Lower leg skin (tissue), 4 donors: ENCODE measurements at regions of chr10 and their contacts with region 1.

Region 1: GRCh38 chr10:22958338-22958737 is 30.5 kb downstream of the ARMC3 start:
- DNase-seq: no peak
- H3K4me3 ChIP-seq: no peak overlapping the region
- CTCF ChIP-seq: no peak
- POLR2A ChIP-seq: no peak

Region 2: DNA sequence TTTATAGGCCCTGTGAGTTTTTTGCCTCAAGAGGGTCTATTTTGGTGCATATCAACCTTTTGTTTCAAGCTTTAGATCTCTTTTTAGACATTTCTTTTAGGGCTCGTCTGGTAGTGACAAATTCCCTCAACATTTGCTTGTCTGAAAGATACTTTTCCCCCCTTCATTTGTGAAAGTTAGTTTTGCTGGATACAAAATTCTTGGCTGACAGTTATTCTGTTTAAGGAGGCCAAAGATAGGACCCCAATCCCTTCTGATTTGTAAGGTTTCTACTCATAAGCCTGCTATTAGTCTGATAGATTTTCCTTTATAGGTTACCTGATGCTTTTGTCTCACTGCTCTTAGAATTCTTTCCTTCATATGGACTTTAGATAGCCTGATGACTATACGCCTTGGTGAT is 66.5 kb before region 1 on chr10:
- intact Hi-C with region 1: loop called (anchors 2 kb)
- DNase-seq: no peak
- H3K4me3 ChIP-seq: no peak overlapping the region
- CTCF ChIP-seq: no peak
- POLR2A ChIP-seq: no peak